Breast epithelium (tissue), 4 donors: ENCODE measurements at regions of chr18 and their contacts with region 1.

Region 1: GRCh38 chr18:24219561-24220317 is 80.9 kb downstream of the CABYR start:
- DNase-seq: no peak
- H3K4me3 ChIP-seq: no peak overlapping the region
- H3K27ac ChIP-seq: peak overlapping the region in 1 of 2 donors; percentile 16
- H3K4me1 ChIP-seq: no peaks in the 10 kb centered on the region
- H3K27me3 ChIP-seq: no peaks in the 10 kb centered on the region
- CTCF ChIP-seq: no peak
- POLR2A ChIP-seq: no peak

Region 2: GRCh38 chr18:23460285-23461273 is 759.2 kb before region 1 on chr18:
- intact Hi-C with region 1: loop called (anchors 5 kb)
- DNase-seq: no peak
- H3K4me3 ChIP-seq: no peak overlapping the region
- H3K27ac ChIP-seq: no peak overlapping the region
- H3K4me1 ChIP-seq: no peaks in the 10 kb centered on the region
- H3K27me3 ChIP-seq: no peaks in the 10 kb centered on the region
- CTCF ChIP-seq: no peak
- POLR2A ChIP-seq: no peak

Region 3: DNA sequence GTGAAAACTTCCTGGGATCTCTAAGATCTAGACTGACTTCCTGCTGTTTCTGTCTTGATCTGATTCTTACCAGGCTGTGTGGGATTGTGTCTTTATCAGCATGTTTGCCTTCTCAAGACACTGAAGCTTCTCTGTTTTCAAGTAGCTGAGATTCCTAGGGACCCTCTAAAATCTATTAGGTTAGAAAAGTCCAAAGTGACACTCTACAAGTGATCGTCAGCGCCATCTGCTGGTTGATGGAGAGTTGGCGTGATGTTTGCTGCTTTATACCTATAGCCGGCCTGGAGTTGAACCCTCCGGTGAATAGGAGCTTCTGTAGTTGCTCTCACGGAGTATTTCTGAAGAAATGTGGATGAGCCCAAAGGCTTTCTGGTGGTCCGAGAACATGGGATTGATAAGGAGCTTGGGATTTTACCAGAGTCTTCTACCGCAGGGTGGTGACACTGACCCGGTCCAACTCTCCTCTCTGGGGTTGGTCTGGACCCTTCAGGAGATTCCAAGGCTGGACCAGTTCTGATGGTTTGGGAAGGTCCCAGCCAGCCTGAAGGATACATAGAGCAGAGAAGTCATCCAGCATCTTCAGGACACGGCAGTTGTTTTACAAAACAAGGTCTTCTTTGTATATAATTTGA is 301.2 kb before region 1 on chr18:
- intact Hi-C with region 1: no loop called
- DNase-seq: peak; percentile 38 to 71
- H3K4me3 ChIP-seq: no peak overlapping the region
- H3K27ac ChIP-seq: no peak overlapping the region
- H3K4me1 ChIP-seq: no peaks in the 10 kb centered on the region
- H3K27me3 ChIP-seq: no peaks in the 10 kb centered on the region
- CTCF ChIP-seq: peak; percentile 50 to 67 (median 67)
- POLR2A ChIP-seq: no peak

Region 4: GRCh38 chr18:24142376-24142775 is 77.4 kb before region 1 on chr18:
- intact Hi-C with region 1: no loop called
- DNase-seq: no peak
- H3K4me3 ChIP-seq: no peak overlapping the region
- H3K27ac ChIP-seq: no peak overlapping the region
- H3K4me1 ChIP-seq: no peaks in the 10 kb centered on the region
- H3K27me3 ChIP-seq: no peaks in the 10 kb centered on the region
- CTCF ChIP-seq: no peak
- POLR2A ChIP-seq: no peak

Region 5: DNA sequence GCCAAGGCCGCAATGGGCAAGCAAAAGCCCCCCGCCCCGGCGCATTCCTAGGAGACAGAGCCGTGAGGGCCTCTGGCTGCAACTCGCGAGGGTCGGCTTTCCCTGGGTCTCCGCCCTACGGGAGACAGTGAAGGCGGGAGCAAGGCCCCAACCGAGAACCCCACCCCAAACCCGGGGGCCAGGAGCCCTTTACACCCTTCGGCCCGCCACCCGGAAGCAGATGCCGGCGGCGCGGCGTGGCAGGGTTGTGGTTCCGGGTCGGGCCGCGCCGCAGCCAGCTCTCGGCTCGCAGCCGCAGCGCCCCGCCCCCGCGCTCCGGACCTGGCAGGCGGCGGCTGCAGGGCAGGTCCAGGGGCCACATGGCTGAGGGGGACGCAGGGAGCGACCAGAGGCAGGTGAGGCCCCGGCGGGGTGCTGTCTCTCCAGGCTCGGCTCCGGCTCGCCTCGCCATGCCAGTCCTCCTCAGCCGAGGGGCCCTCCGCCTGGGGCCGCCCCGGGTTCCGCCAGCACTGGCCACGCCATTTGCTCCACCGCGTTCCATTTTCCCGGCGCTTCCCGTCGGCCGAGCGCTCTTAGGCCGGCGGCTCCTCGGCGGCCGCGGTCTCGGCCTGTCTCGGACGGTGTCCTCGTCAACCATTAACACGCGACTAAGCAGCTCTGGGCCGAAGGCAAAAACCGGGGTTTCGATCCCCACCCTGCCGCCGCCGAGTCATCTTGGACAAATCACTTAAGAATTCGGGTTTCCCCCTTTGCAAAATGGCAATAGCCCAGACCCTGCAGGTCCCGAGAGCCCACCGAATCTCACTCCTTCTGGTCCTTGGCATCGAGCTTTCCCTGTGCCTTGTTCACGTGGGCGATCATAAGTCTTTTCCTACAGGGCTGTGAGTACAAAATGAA is 206.9 kb after region 1 on chr18 and contains the start of gene IMPACT:
- intact Hi-C with region 1: no loop called
- DNase-seq: peak; percentile 62 to 83
- H3K4me3 ChIP-seq: peak within 1 kb of the TSS; percentile 81 to 95 (median 89)
- H3K27ac ChIP-seq: peak within 1 kb of the TSS; percentile 87 to 92
- H3K4me1 ChIP-seq: peaks cover 0 to 4% of the 10 kb centered on the region in 2 donors
- H3K27me3 ChIP-seq: peaks cover 0 to 7% of the 10 kb centered on the region in 2 donors
- CTCF ChIP-seq: no peak
- POLR2A ChIP-seq: no peak
- total RNA-seq, gene IMPACT: 29.0 to 33.7 (median 30.2) TPM